ENCODE measurements at regions of chr7 and their contacts with region 1.

Region 1: DNA sequence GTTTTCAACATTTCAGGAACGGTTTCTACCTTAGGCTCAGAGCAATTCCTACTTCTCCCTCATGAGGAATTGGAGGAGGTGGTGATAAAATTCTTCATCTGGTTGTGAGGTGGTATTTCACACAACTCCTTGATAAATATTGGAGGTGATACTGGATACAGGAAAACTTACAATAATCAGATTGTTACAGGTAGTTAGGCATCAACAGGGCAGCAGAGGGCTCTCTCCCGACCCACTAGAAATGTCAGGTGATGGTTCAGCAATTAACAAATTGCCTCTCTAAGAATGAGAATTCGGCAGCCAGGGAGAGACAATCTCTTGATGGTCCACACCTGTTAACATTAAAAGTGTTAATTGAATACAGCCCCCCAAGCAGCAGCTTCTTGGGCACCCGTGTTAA is 22.6 kb downstream of the ZNF786 start:
- DNase-seq: no peak
- ATAC-seq: no peak
- H3K4me3 ChIP-seq: no peak overlapping the region
- H3K27ac ChIP-seq: no peak overlapping the region
- H3K4me1 ChIP-seq: no peaks in the 10 kb centered on the region
- H3K27me3 ChIP-seq: no peaks in the 10 kb centered on the region
- CTCF ChIP-seq: peak; percentile 57

Region 2: GRCh38 chr7:148987010-148987750 is 80.7 kb before region 1 on chr7:
- CTCF ChIA-PET with region 1: interaction called, 6 read pairs
- POLR2A ChIA-PET with region 1: no interaction called
- in situ Hi-C with region 1: no loop called
- intact Hi-C with region 1: loop called (anchors 5 kb)
- DNase-seq: peak; percentile 91
- ATAC-seq: peak; percentile 91
- H3K4me3 ChIP-seq: peak overlapping the region; percentile 95 to 96
- H3K27ac ChIP-seq: peak overlapping the region; percentile 86
- H3K4me1 ChIP-seq: peaks cover 20% of the 10 kb centered on the region
- H3K27me3 ChIP-seq: no peaks in the 10 kb centered on the region
- CTCF ChIP-seq: no peak

Region 3: GRCh38 chr7:149027055-149027454 is 40.8 kb before region 1 on chr7:
- CTCF ChIA-PET with region 1: interaction called, 3 read pairs
- POLR2A ChIA-PET with region 1: interaction called, 22 read pairs
- in situ Hi-C with region 1: no loop called
- intact Hi-C with region 1: no loop called
- DNase-seq: no peak
- ATAC-seq: no peak
- H3K4me3 ChIP-seq: peak overlapping the region; percentile 75 to 84
- H3K27ac ChIP-seq: peak overlapping the region; percentile 76
- H3K4me1 ChIP-seq: peaks cover 17% of the 10 kb centered on the region; the same call in 1 of the 2 replicates
- H3K27me3 ChIP-seq: no peaks in the 10 kb centered on the region
- CTCF ChIP-seq: no peak

Region 4: DNA sequence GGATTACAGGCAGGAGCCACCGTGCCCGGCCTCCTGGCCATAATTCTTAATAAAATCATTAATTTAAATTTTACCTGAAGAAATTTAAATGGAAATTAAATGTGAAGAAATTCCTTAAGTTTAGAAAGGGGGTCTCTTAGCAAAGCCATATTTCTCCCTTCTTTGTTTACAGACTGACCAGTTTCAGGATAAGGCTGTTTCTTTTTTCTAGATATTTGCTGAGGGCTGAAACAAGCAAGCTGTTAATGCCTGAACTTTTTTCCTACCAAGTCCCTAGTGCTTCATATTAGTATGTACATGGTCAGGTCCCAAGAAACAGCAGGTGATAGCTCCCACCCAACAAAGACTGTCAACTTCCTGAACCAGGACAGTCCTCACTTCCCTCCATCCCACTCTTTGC is 21.5 kb before region 1 on chr7:
- CTCF ChIA-PET with region 1: no interaction called
- POLR2A ChIA-PET with region 1: interaction called, 13 read pairs
- in situ Hi-C with region 1: no loop called
- intact Hi-C with region 1: no loop called
- DNase-seq: no peak
- ATAC-seq: no peak
- H3K4me3 ChIP-seq: no peak overlapping the region
- H3K27ac ChIP-seq: no peak overlapping the region
- H3K4me1 ChIP-seq: no peaks in the 10 kb centered on the region
- H3K27me3 ChIP-seq: no peaks in the 10 kb centered on the region
- CTCF ChIP-seq: no peak

Measured in Panc1 (cell line).